ENCODE measurements at regions of chr10 and their contacts with region 1.

Region 1: DNA sequence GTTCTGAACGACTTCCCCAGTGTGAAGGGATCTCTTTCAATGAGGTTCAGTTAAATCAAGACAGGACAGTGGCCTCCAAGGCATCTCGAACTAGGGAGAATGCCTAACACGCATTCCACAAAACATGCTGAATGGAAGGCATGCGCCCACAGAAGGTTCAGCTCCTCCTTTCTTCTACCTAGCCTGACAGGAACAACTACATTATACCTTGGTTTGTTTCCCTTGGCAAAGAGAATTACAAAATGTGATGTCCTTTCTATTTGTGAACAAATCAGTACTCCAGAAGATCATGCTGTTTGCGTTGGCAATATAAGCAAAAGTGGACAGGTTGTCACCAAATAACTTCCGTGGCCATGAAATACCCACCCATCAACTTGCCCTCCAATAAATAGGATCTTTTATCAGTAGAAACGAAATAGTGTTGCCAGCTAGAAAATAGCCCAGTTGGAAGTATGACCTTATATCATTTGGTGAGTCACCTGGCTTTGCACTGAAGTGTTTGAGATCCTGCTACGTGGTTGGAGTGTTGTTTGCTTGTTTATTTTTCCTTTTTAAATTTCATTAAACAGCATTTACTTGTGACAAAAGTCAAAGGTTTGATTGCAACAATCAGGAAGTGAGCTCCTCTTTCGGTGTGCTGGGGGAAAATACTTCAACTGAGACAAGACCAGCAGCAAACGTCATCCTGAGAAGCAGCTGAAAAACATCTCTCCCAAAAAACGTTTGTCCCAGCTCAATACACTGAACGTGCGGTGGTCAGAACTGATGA is 117.0 kb upstream of the FAM204A start:
- DNase-seq: no peak
- ATAC-seq: no peak

Region 2: GRCh38 chr10:118405928-118406327 is 53.2 kb before region 1 on chr10:
- intact Hi-C with region 1: loop called (anchors 1 kb)
- DNase-seq: no peak
- ATAC-seq: no peak